Calu3 (cell line): ENCODE measurements at regions of chr17 and their contacts with region 1.

Region 1: DNA sequence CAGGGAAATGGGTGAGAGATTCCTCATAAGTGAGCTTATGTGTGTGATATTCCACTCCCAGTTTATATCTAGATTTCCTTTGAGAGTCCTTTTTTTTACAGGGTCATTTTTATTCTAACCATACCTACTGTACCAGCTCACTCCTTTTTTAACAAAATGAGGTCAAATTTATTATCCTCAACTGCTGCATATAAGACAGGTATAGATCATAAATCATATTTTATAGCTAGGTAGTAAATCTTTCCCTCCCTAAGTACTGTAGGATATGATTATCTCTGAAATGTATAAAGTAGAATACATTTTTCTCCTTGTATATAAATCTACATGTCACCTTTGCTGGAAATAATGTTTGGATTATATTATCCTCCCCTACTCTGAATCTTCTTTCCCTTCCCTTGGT is 31.5 kb downstream of the AP2B1 start:
- DNase-seq: no peak
- H3K4me3 Mint-ChIP-seq: no peak overlapping the region
- H3K27ac Mint-ChIP-seq: no peak overlapping the region
- H3K4me1 Mint-ChIP-seq: no peaks in the 10 kb centered on the region
- H3K27me3 Mint-ChIP-seq: no peaks in the 10 kb centered on the region
- CTCF ChIP-seq: no peak

Region 2: GRCh38 chr17:35816723-35817122 is 198.1 kb after region 1 on chr17:
- CTCF ChIA-PET with region 1: interaction called, 10 read pairs
- intact Hi-C with region 1: no loop called
- DNase-seq: no peak
- H3K4me3 Mint-ChIP-seq: no peak overlapping the region
- H3K27ac Mint-ChIP-seq: no peak overlapping the region
- H3K4me1 Mint-ChIP-seq: peaks cover 23% of the 10 kb centered on the region
- H3K27me3 Mint-ChIP-seq: no peaks in the 10 kb centered on the region
- CTCF ChIP-seq: no peak